ENCODE measurements at regions of chr4 and their contacts with region 1.

Region 1: DNA sequence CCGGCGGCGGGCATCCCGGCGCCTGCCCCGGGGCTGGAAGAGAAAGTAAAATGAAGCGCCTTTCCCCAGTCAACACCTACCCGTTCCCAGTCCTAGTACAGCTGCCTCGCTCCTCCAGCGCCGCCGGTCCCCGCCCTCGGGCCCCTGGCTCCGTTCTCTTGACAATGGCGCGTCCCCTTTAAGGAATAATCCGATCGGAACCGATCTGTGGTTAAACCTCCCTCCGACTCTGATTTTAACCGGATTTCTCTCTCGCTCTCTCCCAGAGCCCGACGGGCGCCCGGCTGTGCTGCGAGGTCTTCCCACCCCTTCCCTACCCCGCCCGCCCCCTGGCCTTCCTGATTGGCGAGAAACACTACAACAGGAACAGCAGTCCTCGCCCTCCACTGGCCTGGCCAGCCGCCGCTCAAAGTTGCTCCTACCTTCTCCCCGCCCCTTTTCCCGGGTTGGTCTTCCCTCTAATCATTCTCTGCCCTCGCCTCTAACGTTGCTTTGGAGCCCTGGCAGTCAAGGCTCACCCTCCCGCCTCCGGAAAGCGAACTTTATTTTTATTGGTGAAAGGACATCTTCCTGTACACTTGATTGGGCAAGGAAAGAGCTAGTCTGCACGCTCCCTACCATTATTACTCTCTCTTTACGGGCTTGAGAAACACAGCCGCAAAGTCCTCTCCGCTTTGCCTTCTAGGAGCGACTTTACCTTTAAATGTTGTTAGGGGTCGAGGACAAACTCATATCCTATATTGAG is at the start of gene FRYL:
- DNase-seq: peak; percentile 99
- ATAC-seq: peak; percentile 92
- H3K4me3 ChIP-seq: peak within 1 kb of the TSS; percentile 85 to 99 (median 98)
- H3K27ac ChIP-seq: peak within 1 kb of the TSS; percentile 94
- H3K4me1 ChIP-seq: peaks cover 47% of the 10 kb centered on the region
- H3K27me3 ChIP-seq: no peaks in the 10 kb centered on the region; a peak in 1 of 5 replicates
- CTCF ChIP-seq: no peak
- EP300 ChIP-seq: no peak
- POLR2A ChIP-seq: peak; percentile 58 to 64
- RAD21 ChIP-seq: no peak
- total RNA-seq, gene FRYL: 19.6 and 28.4 TPM in 2 replicates

Region 2: DNA sequence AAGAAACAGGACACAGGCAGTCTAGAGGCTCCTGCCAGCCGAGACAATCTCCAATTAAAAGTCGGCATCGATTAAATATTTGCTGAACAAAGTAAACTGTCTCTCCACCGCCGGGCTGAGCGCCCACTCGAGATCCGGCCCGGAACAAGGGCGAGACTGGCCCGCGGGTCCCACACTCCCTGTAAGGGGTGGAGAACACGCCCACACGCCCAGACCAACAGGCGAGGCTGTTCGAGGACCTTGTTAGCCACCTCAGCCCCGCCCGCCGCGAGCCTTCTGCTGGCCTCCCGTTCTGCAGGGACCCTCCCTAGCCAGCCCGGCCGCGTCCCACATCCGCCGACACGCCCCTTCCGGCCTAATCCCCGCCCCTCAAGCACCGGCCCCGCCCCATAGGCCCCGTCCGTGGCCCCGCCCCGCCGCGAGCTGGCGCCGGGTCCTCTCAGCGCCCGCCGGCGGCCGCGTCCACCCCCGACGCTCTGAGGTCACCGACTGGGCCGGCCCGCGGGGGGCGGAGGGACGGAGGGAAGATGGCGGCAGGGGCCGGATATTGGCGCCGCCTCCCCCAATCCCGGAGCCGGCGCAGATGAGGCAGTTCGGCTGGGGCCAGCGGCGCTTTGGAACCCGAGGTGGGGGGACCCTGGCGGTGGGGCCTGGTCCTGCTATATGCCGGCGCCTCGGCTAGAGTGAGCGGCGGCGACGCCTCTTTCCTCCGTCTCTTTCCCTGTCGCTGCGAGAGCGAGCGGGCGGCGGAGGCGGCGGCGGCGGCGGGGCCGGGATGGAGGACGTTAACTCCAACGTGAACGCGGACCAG is 439.0 kb before region 1 on chr4 and contains the start of gene SLAIN2:
- CTCF ChIA-PET with region 1: no interaction called
- POLR2A ChIA-PET with region 1: no interaction called
- in situ Hi-C with region 1: no loop called
- intact Hi-C with region 1: loop called (anchors 10 kb)
- DNase-seq: peak; percentile 91
- ATAC-seq: peak; percentile 95
- H3K4me3 ChIP-seq: peak within 1 kb of the TSS; percentile 88 to 99 (median 98)
- H3K27ac ChIP-seq: peak within 1 kb of the TSS; percentile 91
- H3K4me1 ChIP-seq: peaks cover 57% of the 10 kb centered on the region
- H3K27me3 ChIP-seq: no peaks in the 10 kb centered on the region; a peak in 1 of 5 replicates
- CTCF ChIP-seq: 0 out of 2 replicates have a peak, but pooled peaks have one; percentile 5
- EP300 ChIP-seq: no peak
- POLR2A ChIP-seq: peak; percentile 68 to 91
- RAD21 ChIP-seq: 0 out of 2 replicates have a peak, but pooled peaks have one; percentile 17
- total RNA-seq, gene SLAIN2: 20.0 and 20.7 TPM in 2 replicates

Region 3: GRCh38 chr4:48578132-48578968 is 201.8 kb before region 1 on chr4:
- CTCF ChIA-PET with region 1: no interaction called
- POLR2A ChIA-PET with region 1: no interaction called
- in situ Hi-C with region 1: loop called (anchors 25 kb)
- intact Hi-C with region 1: loop called (anchors 1 kb)
- DNase-seq: peak; percentile 64
- ATAC-seq: peak; percentile 91
- H3K4me3 ChIP-seq: no peak overlapping the region
- H3K27ac ChIP-seq: no peak overlapping the region
- H3K4me1 ChIP-seq: no peaks in the 10 kb centered on the region
- H3K27me3 ChIP-seq: no peaks in the 10 kb centered on the region
- CTCF ChIP-seq: peak; percentile 85
- EP300 ChIP-seq: no peak
- POLR2A ChIP-seq: no peak
- RAD21 ChIP-seq: peak; percentile 61

Region 4: GRCh38 chr4:48602222-48602621 is 177.9 kb before region 1 on chr4:
- CTCF ChIA-PET with region 1: no interaction called
- POLR2A ChIA-PET with region 1: interaction called, 3 read pairs
- in situ Hi-C with region 1: loop called (anchors 25 kb)
- intact Hi-C with region 1: loop called (anchors 5 kb)
- DNase-seq: no peak
- ATAC-seq: no peak
- H3K4me3 ChIP-seq: no peak overlapping the region
- H3K27ac ChIP-seq: no peak overlapping the region
- H3K4me1 ChIP-seq: peaks cover 36% of the 10 kb centered on the region
- H3K27me3 ChIP-seq: no peaks in the 10 kb centered on the region
- CTCF ChIP-seq: no peak
- EP300 ChIP-seq: no peak
- POLR2A ChIP-seq: no peak
- RAD21 ChIP-seq: no peak

Region 5: GRCh38 chr4:48623182-48623780 is 156.9 kb before region 1 on chr4:
- CTCF ChIA-PET with region 1: no interaction called
- POLR2A ChIA-PET with region 1: no interaction called
- in situ Hi-C with region 1: no loop called
- intact Hi-C with region 1: loop called (anchors 5 kb)
- DNase-seq: peak; percentile 62
- ATAC-seq: peak; percentile 99
- H3K4me3 ChIP-seq: no peak overlapping the region
- H3K27ac ChIP-seq: no peak overlapping the region
- H3K4me1 ChIP-seq: peaks cover 16% of the 10 kb centered on the region
- H3K27me3 ChIP-seq: no peaks in the 10 kb centered on the region
- CTCF ChIP-seq: no peak
- EP300 ChIP-seq: peak in 1 of 2 experiments; percentile 48; a peak in 1 of 4 replicates
- POLR2A ChIP-seq: no peak
- RAD21 ChIP-seq: no peak

Region 6: GRCh38 chr4:48963042-48963679 is 183.0 kb after region 1 on chr4:
- CTCF ChIA-PET with region 1: no interaction called
- POLR2A ChIA-PET with region 1: no interaction called
- in situ Hi-C with region 1: no loop called
- intact Hi-C with region 1: loop called (anchors 2 kb)
- DNase-seq: peak; percentile 82
- ATAC-seq: peak; percentile 95
- H3K4me3 ChIP-seq: no peak overlapping the region
- H3K27ac ChIP-seq: no peak overlapping the region
- H3K4me1 ChIP-seq: no peaks in the 10 kb centered on the region
- H3K27me3 ChIP-seq: no peaks in the 10 kb centered on the region
- CTCF ChIP-seq: peak; percentile 89
- EP300 ChIP-seq: no peak
- POLR2A ChIP-seq: no peak
- RAD21 ChIP-seq: peak; percentile 81

Measured in HepG2 (cell line).